ENCODE measurements at regions of chr14 and their contacts with region 1.

Region 1: GRCh38 chr14:57232006-57232405 is 36.7 kb downstream of the EXOC5 start:
- DNase-seq: no peak
- H3K4me3 ChIP-seq: no peak overlapping the region
- H3K27ac ChIP-seq: no peak overlapping the region
- H3K4me1 ChIP-seq: no peaks in the 10 kb centered on the region
- H3K27me3 ChIP-seq: no peaks in the 10 kb centered on the region
- CTCF ChIP-seq: no peak

Region 2: DNA sequence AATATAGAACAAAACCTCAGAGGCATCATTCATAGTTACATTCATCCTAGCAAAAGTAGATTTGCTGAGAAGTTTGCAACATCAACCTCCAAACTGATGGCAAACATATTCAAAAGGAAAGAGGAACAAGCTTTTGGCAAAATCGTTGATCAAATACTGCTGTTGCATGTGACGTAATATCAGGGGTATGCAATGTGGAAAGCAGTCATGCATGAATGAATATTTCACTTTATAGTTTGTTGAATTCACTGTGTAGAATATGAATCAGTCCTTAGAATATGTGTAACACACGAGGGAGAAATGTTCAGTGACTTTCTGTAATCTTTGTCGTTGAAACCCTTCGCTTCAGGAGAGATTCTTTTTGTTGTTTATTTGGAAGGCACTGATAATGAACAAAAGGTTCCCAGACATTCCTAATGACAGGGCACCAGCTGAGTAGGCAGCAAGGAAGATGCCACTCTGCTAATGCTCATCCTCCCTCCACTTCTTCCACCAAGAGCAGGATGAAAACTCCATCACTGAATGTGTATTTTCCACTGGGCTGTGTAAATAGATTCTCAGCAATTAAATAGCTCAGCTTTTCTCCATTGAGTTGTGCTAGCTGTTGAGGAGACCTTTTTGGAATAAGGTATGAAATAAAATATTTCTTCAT is 987.7 kb before region 1 on chr14:
- intact Hi-C with region 1: loop called (anchors 5 kb)
- DNase-seq: no peak
- H3K4me3 ChIP-seq: no peak overlapping the region
- H3K27ac ChIP-seq: no peak overlapping the region
- H3K4me1 ChIP-seq: peaks cover 0 to 19% (median 0%) of the 10 kb centered on the region in 4 donors
- H3K27me3 ChIP-seq: no peaks in the 10 kb centered on the region
- CTCF ChIP-seq: no peak